GM12878 (cell line): ENCODE measurements at regions of chr5 and their contacts with region 1.

Region 1: GRCh38 chr5:168486136-168486879 is at the start of gene RARS1:
- DNase-seq: peak; percentile 72
- ATAC-seq: peak; percentile 91
- H3K4me3 ChIP-seq: peak within 1 kb of the TSS; percentile 97
- H3K27ac ChIP-seq: peak within 1 kb of the TSS; percentile 79
- H3K4me1 ChIP-seq: peaks cover 9% of the 10 kb centered on the region; the same call in 1 of the 2 replicates
- H3K27me3 ChIP-seq: no peaks in the 10 kb centered on the region
- CTCF ChIP-seq: peak; percentile 97 to 99 (median 98); a peak in 5 of 6 replicates
- EP300 ChIP-seq: no peak
- POLR2A ChIP-seq: peak; percentile 98
- RAD21 ChIP-seq: peak; percentile 64
- polyA plus RNA-seq, gene RARS1: 106 to 122 TPM

Region 2: DNA sequence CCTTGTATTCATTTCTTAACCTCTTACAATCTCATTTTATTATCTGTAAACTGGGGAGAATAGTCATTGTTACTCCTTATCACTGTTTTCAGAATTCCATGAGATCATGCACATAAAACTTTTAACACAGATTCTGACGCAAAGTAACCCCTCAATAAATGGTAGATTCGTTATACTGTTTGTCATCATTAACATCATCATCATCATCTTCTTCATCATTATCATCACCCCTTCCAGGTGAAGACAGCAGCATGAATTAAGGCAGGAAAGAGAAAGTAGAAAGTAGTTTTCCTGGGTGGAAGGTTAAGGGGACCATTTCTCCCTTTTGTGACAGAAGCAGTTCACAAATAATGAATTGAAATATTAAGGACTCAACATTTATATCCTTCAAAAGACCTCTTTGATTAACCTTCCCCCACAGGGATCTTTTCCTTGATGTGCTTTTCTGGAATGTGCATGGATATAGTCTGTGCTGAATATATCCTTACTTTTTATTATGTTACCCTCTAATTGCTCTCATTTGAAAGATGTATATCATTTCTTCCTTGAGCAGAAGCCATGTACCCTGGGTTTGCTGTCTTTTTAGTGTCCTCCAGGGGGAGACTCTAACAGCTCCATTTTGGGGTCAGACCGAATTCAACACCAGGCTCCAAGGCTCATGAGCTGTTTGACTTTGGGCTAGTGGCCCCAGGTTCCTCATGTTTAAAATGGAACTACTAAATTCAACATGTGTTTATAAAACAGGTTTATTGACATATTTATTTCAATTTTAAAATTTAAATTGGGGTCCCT is 1224.8 kb before region 1 on chr5:
- CTCF ChIA-PET with region 1: no interaction called
- POLR2A ChIA-PET with region 1: interaction called, 10 read pairs
- RAD21 ChIA-PET with region 1: no interaction called
- SMC1A ChIA-PET with region 1: no interaction called
- in situ Hi-C with region 1: no loop called
- intact Hi-C with region 1: no loop called
- DNase-seq: no peak
- ATAC-seq: peak; percentile 71
- H3K4me3 ChIP-seq: no peak overlapping the region
- H3K27ac ChIP-seq: no peak overlapping the region
- H3K4me1 ChIP-seq: no peaks in the 10 kb centered on the region
- H3K27me3 ChIP-seq: no peaks in the 10 kb centered on the region
- CTCF ChIP-seq: peak; percentile 4 to 44 (median 27); a peak in 3 of 6 replicates
- EP300 ChIP-seq: no peak
- POLR2A ChIP-seq: no peak
- RAD21 ChIP-seq: 0 out of 2 replicates have a peak, but pooled peaks have one; percentile 9

Region 3: DNA sequence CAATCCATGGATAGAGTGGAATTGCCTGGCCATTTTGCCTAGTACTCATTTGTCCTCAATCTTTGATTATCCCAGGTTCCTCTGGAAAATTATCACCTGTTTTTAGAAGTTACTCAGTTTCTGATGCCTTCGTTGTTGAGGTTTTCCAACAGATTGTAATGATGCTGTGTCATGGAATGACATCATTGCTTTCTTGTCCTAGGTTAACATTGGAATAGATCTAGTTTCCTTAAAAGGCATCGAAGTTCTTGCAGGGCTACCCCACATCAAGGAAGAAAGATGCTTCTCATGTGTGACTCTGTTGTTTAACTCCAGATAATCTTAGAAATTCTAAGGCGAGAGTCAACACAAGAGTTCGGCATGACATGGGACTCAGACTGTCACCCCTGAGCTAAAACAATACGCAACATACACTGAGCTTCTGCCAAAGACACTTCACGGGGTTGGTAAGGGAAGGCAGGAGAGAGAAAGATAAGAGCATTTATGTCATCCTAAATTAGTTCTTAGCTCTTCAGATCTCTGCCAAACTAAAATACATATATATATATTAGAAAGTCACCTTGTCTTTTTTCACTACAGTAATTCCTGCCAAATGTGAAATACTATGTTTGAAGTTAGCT is 488.1 kb before region 1 on chr5:
- CTCF ChIA-PET with region 1: no interaction called
- POLR2A ChIA-PET with region 1: no interaction called
- RAD21 ChIA-PET with region 1: no interaction called
- SMC1A ChIA-PET with region 1: no interaction called
- in situ Hi-C with region 1: no loop called
- intact Hi-C with region 1: no loop called
- DNase-seq: no peak
- ATAC-seq: no peak
- H3K4me3 ChIP-seq: no peak overlapping the region
- H3K27ac ChIP-seq: no peak overlapping the region
- H3K4me1 ChIP-seq: no peaks in the 10 kb centered on the region
- H3K27me3 ChIP-seq: no peaks in the 10 kb centered on the region
- CTCF ChIP-seq: no peak
- EP300 ChIP-seq: no peak
- POLR2A ChIP-seq: no peak
- RAD21 ChIP-seq: no peak

Region 4: GRCh38 chr5:168268949-168269943 is 217.1 kb before region 1 on chr5:
- CTCF ChIA-PET with region 1: interaction called, 3 read pairs
- POLR2A ChIA-PET with region 1: no interaction called
- RAD21 ChIA-PET with region 1: no interaction called
- SMC1A ChIA-PET with region 1: interaction called, 4 read pairs
- in situ Hi-C with region 1: no loop called
- intact Hi-C with region 1: loop called (anchors 2 kb)
- DNase-seq: no peak
- ATAC-seq: peak; percentile 97
- H3K4me3 ChIP-seq: peak overlapping the region; percentile 56; the same call in 1 of the 2 replicates
- H3K27ac ChIP-seq: no peak overlapping the region
- H3K4me1 ChIP-seq: peaks cover 3% of the 10 kb centered on the region
- H3K27me3 ChIP-seq: no peaks in the 10 kb centered on the region
- CTCF ChIP-seq: peak; percentile 80 to 89 (median 81)
- EP300 ChIP-seq: no peak
- POLR2A ChIP-seq: no peak
- RAD21 ChIP-seq: peak; percentile 98

Region 5: GRCh38 chr5:168291464-168291961 is 194.8 kb before region 1 on chr5 and contains the start of gene WWC1:
- CTCF ChIA-PET with region 1: no interaction called
- POLR2A ChIA-PET with region 1: no interaction called
- RAD21 ChIA-PET with region 1: no interaction called
- SMC1A ChIA-PET with region 1: no interaction called
- in situ Hi-C with region 1: no loop called
- intact Hi-C with region 1: loop called (anchors 5 kb)
- DNase-seq: peak; percentile 31
- ATAC-seq: peak; percentile 85
- H3K4me3 ChIP-seq: peak within 1 kb of the TSS; percentile 70
- H3K27ac ChIP-seq: no peak within 1 kb of the TSS
- H3K4me1 ChIP-seq: peaks cover 26% of the 10 kb centered on the region
- H3K27me3 ChIP-seq: no peaks in the 10 kb centered on the region
- CTCF ChIP-seq: peak in 2 of 3 experiments; percentile 4 to 20; a peak in 1 of 6 replicates
- EP300 ChIP-seq: no peak
- POLR2A ChIP-seq: peak; percentile 76
- RAD21 ChIP-seq: peak; percentile 24; the same call in 1 of the 2 replicates
- polyA plus RNA-seq, gene WWC1: 0.50 to 1.2 TPM

Region 6: DNA sequence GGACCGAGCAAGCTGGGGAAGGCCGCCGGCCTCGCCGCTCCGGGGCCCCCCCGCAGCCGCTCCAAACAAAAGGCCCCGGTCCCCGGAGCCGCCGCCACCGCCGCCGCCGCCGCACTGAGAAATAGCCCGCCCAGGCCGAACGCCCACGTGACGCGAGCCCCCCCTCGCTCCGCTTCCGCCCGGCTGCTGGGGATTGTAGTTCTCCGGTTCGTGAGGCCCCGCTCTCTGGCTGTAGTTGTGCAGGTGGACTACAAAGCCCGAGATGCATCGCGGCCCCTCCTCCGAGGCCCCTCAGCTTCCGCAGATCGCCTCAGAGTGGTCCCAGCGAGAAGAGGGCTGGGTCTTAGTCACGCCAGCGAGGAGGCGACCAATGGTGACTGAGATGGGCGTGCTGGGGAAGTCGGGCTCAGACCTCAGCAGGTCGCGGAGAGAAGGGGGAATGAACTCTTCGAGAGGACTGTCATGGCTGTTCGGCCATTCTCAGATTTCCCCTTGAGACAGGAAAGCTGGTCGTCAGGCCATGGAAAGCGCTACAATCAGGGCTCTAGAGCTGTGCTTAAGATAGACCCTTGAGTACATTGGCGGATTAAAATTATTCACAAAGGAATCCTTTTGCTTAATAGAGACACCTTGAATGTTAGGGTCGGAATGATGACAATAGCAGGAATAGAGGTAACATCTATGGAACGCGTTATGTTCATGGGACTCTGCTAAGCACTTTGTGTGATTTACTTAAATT is 93.3 kb after region 1 on chr5:
- CTCF ChIA-PET with region 1: interaction called, 3 read pairs
- POLR2A ChIA-PET with region 1: interaction called, 6 read pairs
- RAD21 ChIA-PET with region 1: interaction called, 5 read pairs
- SMC1A ChIA-PET with region 1: interaction called, 4 read pairs
- in situ Hi-C with region 1: no loop called
- intact Hi-C with region 1: loop called (anchors 2 kb)
- DNase-seq: peak; percentile 97
- ATAC-seq: peak; percentile 92
- H3K4me3 ChIP-seq: peak overlapping the region; percentile 89
- H3K27ac ChIP-seq: peak overlapping the region; percentile 98
- H3K4me1 ChIP-seq: peaks cover 19% of the 10 kb centered on the region
- H3K27me3 ChIP-seq: no peaks in the 10 kb centered on the region
- CTCF ChIP-seq: no peak
- EP300 ChIP-seq: peak in 1 of 2 experiments; percentile 52; a peak in 1 of 4 replicates
- POLR2A ChIP-seq: peak; percentile 94
- RAD21 ChIP-seq: no peak

Region 7: GRCh38 chr5:168612996-168613395 is 126.7 kb after region 1 on chr5:
- CTCF ChIA-PET with region 1: no interaction called
- POLR2A ChIA-PET with region 1: no interaction called
- RAD21 ChIA-PET with region 1: no interaction called
- SMC1A ChIA-PET with region 1: no interaction called
- in situ Hi-C with region 1: no loop called
- intact Hi-C with region 1: no loop called
- DNase-seq: no peak
- ATAC-seq: peak; percentile 49
- H3K4me3 ChIP-seq: no peak overlapping the region
- H3K27ac ChIP-seq: no peak overlapping the region
- H3K4me1 ChIP-seq: peaks cover 5% of the 10 kb centered on the region; the same call in 1 of the 2 replicates
- H3K27me3 ChIP-seq: no peaks in the 10 kb centered on the region; a peak in 1 of 4 replicates
- CTCF ChIP-seq: no peak
- EP300 ChIP-seq: no peak
- POLR2A ChIP-seq: no peak
- RAD21 ChIP-seq: no peak